Gastrocnemius medialis (tissue), 4 donors: ENCODE measurements at regions of chr14 and their contacts with region 1.

Region 1: GRCh38 chr14:60862286-60862685 is 118.6 kb downstream of the TRMT5 start:
- DNase-seq: peak; percentile 66 to 72
- ATAC-seq: peak; percentile 79 to 92
- H3K4me3 ChIP-seq: no peak overlapping the region
- H3K27ac ChIP-seq: peak overlapping the region; percentile 76 to 87 (median 84)
- H3K4me1 ChIP-seq: peaks cover 54 to 60% of the 10 kb centered on the region in 2 donors
- H3K27me3 ChIP-seq: no peaks in the 10 kb centered on the region
- CTCF ChIP-seq: no peak
- POLR2A ChIP-seq: no peak

Region 2: DNA sequence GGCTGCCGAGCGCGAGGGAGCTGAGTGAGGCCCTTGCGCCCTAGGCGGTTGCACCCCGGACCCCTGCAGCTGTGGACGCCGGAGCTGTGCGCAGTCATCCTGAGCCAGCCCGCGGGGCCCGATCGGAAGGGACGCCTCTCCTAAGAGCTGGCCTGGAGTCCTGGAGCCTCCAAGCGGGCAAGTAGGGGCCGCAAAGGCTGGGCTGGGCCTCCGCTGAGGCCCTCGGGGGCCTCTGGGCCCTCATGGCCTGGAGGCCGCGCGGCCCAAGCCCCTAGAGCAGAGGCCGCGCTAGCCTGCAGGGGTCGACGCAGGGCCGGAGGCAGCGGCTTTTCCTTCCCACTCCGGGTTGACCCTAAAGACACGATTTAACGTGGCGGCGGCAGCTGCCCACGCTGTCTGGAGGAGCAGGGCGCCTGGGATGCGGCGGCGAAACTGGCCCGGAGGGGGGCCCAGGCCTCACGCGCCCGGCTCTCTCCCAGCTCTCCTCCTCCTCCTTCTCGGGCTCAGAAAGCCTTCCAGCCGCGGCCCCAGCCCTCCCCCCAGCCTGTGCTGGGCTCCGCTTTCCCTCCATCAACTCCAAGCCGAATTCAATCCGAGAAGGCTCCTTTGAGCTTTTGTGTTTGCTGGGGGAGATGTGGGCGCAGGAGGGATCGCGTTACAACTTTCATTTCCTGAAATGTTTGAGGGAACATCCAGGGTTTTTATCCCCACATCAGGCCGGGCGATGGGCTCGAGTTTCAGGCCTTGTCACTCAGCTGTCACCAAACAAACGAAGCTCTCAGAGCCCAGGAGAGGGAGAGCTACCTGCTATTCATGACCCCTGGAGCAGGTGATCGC is 224.6 kb before region 1 on chr14:
- in situ Hi-C with region 1: no loop called
- intact Hi-C with region 1: loop called (anchors 5 kb)
- DNase-seq: peak in 1 of 2 donors; percentile 40
- ATAC-seq: peak; percentile 37 to 48
- H3K4me3 ChIP-seq: peak overlapping the region; percentile 57 to 69 (median 62)
- H3K27ac ChIP-seq: peak overlapping the region; percentile 93 to 98 (median 95)
- H3K4me1 ChIP-seq: peaks cover 44 to 52% of the 10 kb centered on the region in 2 donors
- H3K27me3 ChIP-seq: no peaks in the 10 kb centered on the region
- CTCF ChIP-seq: peak in 1 of 5 experiments; percentile 13
- POLR2A ChIP-seq: no peak

Region 3: DNA sequence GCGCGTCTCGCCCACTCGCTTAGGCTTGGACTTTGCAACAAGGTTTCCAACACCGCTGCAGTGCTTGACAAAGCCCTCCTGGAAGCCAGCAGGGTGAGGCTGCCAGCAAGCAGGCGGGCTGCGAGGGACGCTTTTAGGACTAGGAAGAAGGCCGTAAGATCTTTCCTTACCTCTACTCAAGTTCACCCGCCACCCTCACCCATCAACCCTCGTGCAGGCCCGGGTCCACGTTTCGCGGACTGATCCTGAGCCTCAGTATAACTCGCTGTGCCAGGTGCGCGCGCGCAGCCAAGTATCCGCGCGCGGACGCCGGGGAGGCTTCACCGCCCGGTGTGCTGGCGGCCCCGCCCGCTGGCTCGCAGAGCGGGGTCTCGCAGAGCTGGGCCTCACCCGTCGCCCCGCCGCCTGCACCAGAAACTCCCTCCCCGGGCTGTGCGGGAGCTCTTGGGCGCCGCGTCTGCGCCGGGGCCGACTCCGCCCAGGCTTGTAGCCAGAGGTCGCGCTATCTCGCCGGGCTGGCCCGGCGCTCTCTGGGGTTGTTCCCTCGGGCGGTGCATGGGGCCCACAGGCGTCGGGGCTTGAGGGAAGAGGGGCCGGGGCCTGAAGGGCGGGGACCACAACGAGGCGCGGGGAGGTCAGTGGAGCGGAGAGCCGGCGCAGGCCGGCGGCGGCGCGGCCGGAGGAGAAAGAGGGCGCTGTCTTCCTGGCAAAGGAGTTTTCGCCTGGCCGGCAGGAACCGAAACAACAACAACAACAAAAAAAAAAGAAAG is 205.4 kb before region 1 on chr14:
- in situ Hi-C with region 1: no loop called
- intact Hi-C with region 1: loop called (anchors 5 kb)
- DNase-seq: peak; percentile 67 to 88
- ATAC-seq: peak; percentile 58 to 59
- H3K4me3 ChIP-seq: peak overlapping the region; percentile 73 to 90 (median 84)
- H3K27ac ChIP-seq: peak overlapping the region; percentile 93 to 98 (median 95)
- H3K4me1 ChIP-seq: peaks cover 26 to 34% of the 10 kb centered on the region in 2 donors
- H3K27me3 ChIP-seq: no peaks in the 10 kb centered on the region
- CTCF ChIP-seq: peak in 4 of 5 experiments; percentile 20 to 70 (median 49)
- POLR2A ChIP-seq: peak; percentile 33 to 50

Region 4: DNA sequence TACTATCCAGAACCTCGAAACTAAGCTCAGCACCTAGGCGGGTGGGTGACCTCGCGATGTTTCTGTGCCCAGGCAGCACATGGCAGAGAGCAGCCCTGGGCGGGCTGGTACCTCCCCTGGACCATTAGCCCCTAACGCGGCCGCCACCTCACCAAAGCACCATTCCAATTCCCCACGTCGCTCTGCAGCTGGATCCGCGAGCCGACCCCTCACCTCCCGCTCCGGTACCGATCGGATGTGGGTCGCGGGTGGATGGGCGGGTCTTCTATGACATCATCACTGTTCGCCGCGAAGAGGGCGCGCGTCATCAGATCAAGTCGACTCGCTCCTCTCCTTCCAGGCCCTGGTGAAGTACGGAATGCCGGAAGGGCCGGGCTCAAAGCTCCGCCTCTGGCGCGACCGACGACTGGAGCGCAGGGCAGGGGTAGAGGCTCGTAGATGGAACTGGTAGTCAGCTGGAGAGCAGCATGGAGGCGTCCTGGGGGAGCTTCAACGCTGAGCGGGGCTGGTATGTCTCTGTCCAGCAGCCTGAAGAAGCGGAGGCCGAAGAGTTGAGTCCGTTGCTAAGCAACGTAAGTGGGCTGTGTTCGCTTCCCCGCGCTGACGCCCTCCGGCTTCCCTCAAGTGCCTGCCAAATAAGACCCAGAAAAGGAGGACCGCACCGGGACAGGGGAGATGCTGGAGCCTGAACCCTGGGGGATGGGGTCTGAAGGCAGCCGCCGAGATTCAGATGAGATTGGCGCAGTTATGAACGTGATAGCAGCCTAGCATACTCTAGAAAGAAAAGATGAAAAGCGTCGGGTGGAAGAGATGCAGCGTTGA is 118.7 kb after region 1 on chr14 and contains the starts of genes SLC38A6 and TRMT5:
- in situ Hi-C with region 1: no loop called
- intact Hi-C with region 1: loop called (anchors 5 kb)
- DNase-seq: peak; percentile 92 to 94
- ATAC-seq: peak; percentile 86 to 92
- H3K4me3 ChIP-seq: peak within 1 kb of the TSS; percentile 69 to 90 (median 83)
- H3K27ac ChIP-seq: peak within 1 kb of the TSS; percentile 88 to 95 (median 90)
- H3K4me1 ChIP-seq: peaks cover 56 to 57% of the 10 kb centered on the region in 2 donors
- H3K27me3 ChIP-seq: no peaks in the 10 kb centered on the region
- CTCF ChIP-seq: peak in 1 of 5 experiments; percentile 30
- POLR2A ChIP-seq: peak; percentile 48 to 58
- total RNA-seq, gene SLC38A6: 4.0 to 22.6 (median 7.0) TPM
- total RNA-seq, gene TRMT5: 5.9 to 7.6 (median 6.5) TPM

Region 5: DNA sequence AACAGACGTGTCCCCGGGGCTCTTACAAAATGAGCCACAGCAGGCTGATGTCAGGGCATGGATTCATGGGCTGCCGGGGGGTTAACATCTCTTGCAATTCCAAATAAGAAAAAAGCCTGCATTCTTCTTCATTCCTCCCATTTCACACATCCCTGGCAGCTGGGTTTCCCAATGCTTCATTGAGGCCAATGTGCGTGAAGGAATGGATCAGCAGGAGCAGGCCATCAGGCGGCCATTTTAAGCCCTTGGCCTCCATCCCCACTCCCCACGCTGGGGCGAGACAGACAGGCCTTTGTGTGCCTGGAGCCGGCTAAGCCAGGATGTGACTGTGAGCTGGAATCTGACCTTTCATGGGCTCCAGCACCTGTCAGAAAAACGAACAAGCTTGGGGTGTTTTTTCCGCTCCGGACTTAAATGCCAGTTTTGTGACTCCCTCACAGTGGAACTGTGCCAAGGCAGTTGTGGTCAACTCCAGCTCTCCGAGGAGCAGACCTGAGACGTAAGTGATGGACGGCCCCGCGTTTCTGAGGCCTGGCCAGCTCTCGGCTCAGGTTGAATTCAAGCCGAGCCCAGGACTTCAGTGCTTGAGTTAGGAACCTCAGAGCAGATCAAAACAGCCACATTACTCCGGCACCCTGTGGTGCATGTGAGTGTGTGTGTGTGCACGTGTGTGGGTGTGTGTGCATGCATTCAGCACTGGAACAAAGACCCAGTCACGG is 285.7 kb after region 1 on chr14:
- in situ Hi-C with region 1: no loop called
- intact Hi-C with region 1: loop called (anchors 10 kb)
- DNase-seq: peak; percentile 77 to 89
- ATAC-seq: peak; percentile 44 to 65
- H3K4me3 ChIP-seq: peak overlapping the region in 3 of 4 donors; percentile 3 to 27 (median 16)
- H3K27ac ChIP-seq: peak overlapping the region; percentile 84 to 95 (median 88)
- H3K4me1 ChIP-seq: peaks cover 35 to 43% of the 10 kb centered on the region in 2 donors
- H3K27me3 ChIP-seq: no peaks in the 10 kb centered on the region
- CTCF ChIP-seq: no peak
- POLR2A ChIP-seq: no peak